ENCODE measurements at regions of chr1 and their contacts with region 1.

Region 1: GRCh38 chr1:180343931-180344769 is 114.1 kb downstream of the LHX4 start:
- DNase-seq: no peak
- ATAC-seq: no peak
- H3K4me3 ChIP-seq: no peak overlapping the region
- H3K4me3 Mint-ChIP-seq: no peak overlapping the region
- H3K27ac ChIP-seq: no peak overlapping the region
- H3K27ac Mint-ChIP-seq: no peak overlapping the region
- H3K4me1 ChIP-seq: no peaks in the 10 kb centered on the region
- H3K4me1 Mint-ChIP-seq: peaks cover 20% of the 10 kb centered on the region
- H3K27me3 ChIP-seq: no peaks in the 10 kb centered on the region
- H3K27me3 Mint-ChIP-seq: no peaks in the 10 kb centered on the region
- CTCF ChIP-seq: no peak

Region 2: DNA sequence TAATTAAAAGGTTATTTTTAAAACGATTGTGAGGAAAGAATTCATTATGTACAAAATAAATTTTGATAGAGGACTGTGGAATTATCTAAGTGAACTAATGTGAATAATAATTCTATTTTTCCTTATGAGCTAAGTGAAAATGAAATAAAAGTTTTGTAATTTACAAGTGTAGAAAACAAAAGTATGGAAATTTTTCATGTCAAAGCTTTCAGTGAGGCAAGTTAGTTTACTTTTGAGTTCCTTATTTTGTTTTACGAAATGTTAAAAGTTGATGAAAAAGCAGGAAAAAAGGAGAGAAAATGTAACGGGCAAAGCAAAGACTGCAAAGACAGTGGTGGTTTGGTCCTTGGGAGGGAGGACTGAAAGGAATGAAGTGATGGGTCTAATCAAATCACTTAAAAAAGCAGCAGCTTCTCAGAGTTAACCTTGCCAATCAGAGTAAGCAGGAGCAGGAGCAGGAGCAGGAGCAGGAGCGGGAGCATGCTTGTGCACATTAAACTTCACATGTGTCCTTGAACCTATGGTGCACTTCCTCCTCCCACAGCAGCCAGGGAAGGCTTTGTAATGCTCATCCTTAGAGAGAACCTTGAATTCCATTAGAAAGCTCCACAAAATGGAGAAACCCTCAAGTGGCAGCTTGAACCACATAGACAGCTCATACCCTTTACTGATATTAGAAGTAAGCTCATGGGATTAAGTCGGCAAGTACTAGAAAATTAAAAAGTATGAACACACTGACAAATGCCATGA is 19.3 kb after region 1 on chr1:
- CTCF ChIA-PET with region 1: no interaction called
- POLR2A ChIA-PET with region 1: no interaction called
- intact Hi-C with region 1: loop called in 1 of 2 experiments (anchors 2 kb)
- DNase-seq: no peak
- ATAC-seq: no peak
- H3K4me3 ChIP-seq: no peak overlapping the region
- H3K4me3 Mint-ChIP-seq: no peak overlapping the region
- H3K27ac ChIP-seq: no peak overlapping the region
- H3K27ac Mint-ChIP-seq: no peak overlapping the region
- H3K4me1 ChIP-seq: no peaks in the 10 kb centered on the region
- H3K4me1 Mint-ChIP-seq: peaks cover 4% of the 10 kb centered on the region
- H3K27me3 ChIP-seq: no peaks in the 10 kb centered on the region
- H3K27me3 Mint-ChIP-seq: no peaks in the 10 kb centered on the region
- CTCF ChIP-seq: no peak